AG04450 (cell line): ENCODE measurements at regions of chr19 and their contacts with region 1.

Region 1: DNA sequence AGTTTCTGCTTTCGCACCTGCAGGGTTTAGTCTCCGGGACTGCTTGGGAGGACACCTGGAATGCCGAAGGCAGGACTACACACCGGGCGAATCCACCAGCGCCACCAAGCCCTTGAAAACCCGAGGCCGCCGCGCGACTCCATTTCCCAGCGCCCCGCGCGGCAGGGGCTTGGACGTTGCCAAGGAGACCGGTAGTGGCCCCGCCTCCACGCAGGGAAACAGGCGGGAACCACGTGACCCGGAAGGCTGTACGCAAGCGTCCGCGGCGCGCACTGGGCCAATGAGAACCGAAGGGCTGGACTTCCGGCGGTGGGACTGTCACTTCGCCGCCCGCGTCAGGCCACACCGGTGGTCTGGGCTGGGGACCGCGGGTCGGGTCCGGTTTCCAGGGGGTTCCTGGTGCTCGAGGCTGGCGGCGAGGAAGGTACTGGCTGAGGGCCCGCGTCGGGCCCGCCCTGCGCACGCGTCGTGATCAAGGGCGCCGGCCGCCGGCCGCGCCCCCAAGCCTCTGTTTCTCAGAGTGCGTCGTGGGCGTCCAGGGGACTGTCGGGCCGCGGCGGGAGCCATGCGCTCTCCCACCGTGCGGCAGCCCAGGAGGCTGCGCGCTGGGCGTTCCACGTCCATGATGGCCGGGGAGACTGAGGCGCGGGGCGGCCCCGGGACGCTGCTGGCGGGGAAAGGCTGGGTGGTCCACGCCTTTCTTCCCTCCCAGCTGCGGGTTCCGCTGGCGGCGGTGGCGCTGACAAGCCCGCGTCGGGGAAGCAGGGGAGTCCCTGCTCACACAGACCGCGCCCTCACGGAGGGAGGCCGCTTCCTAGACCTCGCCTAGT is at the start of gene ZNF324:
- DNase-seq: peak; percentile 79
- H3K4me3 ChIP-seq: peak within 1 kb of the TSS; percentile 79
- H3K27ac ChIP-seq: no peak within 1 kb of the TSS
- H3K27me3 ChIP-seq: no peaks in the 10 kb centered on the region
- CTCF ChIP-seq: no peak
- polyA plus RNA-seq, gene ZNF324: 4.4 and 4.6 TPM in 2 replicates

Region 2: GRCh38 chr19:58409010-58409790 is 57.8 kb before region 1 on chr19:
- CTCF ChIA-PET with region 1: no interaction called
- POLR2A ChIA-PET with region 1: interaction called, 10 read pairs
- DNase-seq: no peak
- H3K4me3 ChIP-seq: peak overlapping the region; percentile 96
- H3K27ac ChIP-seq: peak overlapping the region; percentile 52
- H3K27me3 ChIP-seq: no peaks in the 10 kb centered on the region
- CTCF ChIP-seq: no peak

Region 3: DNA sequence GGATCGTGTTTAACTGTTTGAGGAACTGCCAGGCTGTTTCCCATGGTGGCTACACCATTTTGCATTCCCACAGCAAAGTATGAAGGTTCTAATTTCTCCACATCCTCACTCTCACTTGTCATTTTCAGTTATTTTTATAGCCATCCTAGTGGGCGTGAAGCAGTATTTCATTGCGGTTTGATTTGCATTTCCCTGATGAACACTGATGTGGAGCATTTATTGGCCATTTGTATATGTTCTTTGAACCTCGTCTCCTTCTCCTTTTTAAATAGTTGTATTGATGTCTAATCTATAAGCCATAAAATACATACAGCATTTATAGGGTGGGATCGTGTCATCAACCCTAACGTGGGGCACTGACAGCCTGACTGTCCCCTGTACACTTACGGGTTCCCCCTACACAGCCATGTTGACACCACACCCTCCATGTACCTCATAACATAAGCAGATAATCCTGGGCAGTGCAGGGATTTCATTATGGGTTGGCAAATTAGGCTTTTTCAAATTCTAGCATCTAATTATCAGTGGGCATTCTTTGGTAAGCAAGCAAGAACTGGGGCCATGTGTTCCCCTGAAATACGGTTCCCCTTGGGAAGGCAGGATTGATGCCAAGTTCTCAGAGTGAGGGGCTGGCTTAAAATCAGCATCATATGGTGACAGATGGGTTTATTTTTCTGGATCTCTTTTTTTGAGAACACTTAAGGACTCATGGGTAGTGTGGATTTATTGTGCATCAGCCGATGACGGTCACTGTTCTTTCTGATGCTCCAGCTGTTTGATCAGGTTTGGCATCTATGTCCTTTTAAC is 64.3 kb after region 1 on chr19:
- CTCF ChIA-PET with region 1: no interaction called
- POLR2A ChIA-PET with region 1: no interaction called
- DNase-seq: no peak
- H3K4me3 ChIP-seq: no peak overlapping the region
- H3K27ac ChIP-seq: no peak overlapping the region
- H3K27me3 ChIP-seq: peaks cover 20% of the 10 kb centered on the region
- CTCF ChIP-seq: no peak